ENCODE measurements at regions of chr15 and their contacts with region 1.

Region 1: GRCh38 chr15:85742186-85742821 is 52.4 kb downstream of the KLHL25 start:
- DNase-seq: no peak
- ATAC-seq: no peak
- H3K4me3 ChIP-seq: no peak overlapping the region
- H3K27ac ChIP-seq: no peak overlapping the region
- H3K4me1 ChIP-seq: no peaks in the 10 kb centered on the region
- CTCF ChIP-seq: no peak
- EP300 ChIP-seq: no peak
- POLR2A ChIP-seq: no peak
- RAD21 ChIP-seq: no peak

Region 2: GRCh38 chr15:85730001-85730820 is 12.1 kb before region 1 on chr15:
- CTCF ChIA-PET with region 1: interaction called, 62 read pairs
- POLR2A ChIA-PET with region 1: no interaction called
- DNase-seq: peak; percentile 73 to 74
- ATAC-seq: peak; percentile 83 to 91
- H3K4me3 ChIP-seq: no peak overlapping the region
- H3K27ac ChIP-seq: no peak overlapping the region
- H3K4me1 ChIP-seq: no peaks in the 10 kb centered on the region
- CTCF ChIP-seq: peak; percentile 91
- EP300 ChIP-seq: no peak
- POLR2A ChIP-seq: no peak
- RAD21 ChIP-seq: peak; percentile 82 to 83

Measured in A549 (cell line).